Posterior cingulate gyrus (tissue), 11 donors: ENCODE measurements at regions of chr6 and their contacts with region 1.

Region 1: GRCh38 chr6:122033539-122034181 is 365.8 kb upstream of the HSF2 start:
- DNase-seq: no peak

Region 2: GRCh38 chr6:122184401-122184827 is 150.8 kb after region 1 on chr6:
- intact Hi-C with region 1: loop called (anchors 10 kb)
- DNase-seq: no peak